Activated CD4-positive, alpha-beta memory T cell treated with anti-CD3 and anti-CD28 coated beads for 36 hours (primary cell): ENCODE measurements at regions of chr17 and their contacts with region 1.

Region 1: GRCh38 chr17:79728226-79728907 is 2.4 kb upstream of the ENPP7 start:
- DNase-seq: peak; percentile 91
- H3K4me3 Mint-ChIP-seq: peak overlapping the region; percentile 41
- H3K27ac Mint-ChIP-seq: peak overlapping the region; percentile 70
- H3K4me1 Mint-ChIP-seq: peaks cover 22% of the 10 kb centered on the region
- H3K27me3 Mint-ChIP-seq: no peaks in the 10 kb centered on the region

Region 2: DNA sequence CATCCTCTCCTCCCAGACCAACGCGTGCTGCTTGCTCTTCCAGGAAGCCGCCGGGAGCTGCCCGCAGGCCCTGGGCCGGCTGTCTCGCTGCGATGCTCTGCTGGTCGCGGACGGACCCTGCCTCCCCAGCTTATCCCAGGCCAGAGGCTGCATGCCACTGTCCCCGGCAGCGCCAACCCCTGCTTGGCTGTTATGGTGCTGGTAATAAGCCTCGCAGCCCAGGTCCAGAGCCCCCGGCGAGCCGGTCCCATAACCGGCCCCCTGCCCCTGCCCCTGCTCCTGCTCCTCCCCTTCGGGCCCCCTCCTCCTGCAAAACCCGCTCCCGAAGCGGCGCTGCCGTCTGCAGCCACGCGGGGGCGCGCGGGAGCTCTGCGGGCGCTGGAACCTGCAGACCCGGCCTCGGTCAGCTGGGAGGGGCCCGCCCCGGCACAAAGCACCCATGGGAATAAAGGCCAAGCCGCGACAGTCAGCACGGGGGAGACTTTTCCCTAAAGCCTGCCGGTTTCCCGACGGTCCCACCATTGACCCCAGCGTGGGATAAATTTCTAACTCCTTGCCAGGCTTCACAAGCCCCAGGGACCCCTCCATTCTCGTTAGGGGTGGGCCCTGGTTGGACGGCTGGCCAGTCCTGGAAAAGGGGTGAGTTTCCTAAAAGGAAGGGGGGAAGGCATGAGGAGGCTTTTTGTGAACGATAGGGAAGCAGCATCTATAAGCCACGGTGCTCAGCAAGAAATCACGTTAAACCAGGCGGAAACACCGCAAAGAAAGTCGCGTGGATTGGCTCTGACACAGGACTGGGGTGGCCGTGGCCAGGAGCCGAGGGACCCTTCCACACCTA is 13.6 kb after region 1 on chr17:
- CTCF ChIA-PET with region 1: interaction called, 11 read pairs
- POLR2A ChIA-PET with region 1: no interaction called
- intact Hi-C with region 1: no loop called
- DNase-seq: peak; percentile 81
- H3K4me3 Mint-ChIP-seq: no peak overlapping the region
- H3K27ac Mint-ChIP-seq: no peak overlapping the region
- H3K4me1 Mint-ChIP-seq: peaks cover 11% of the 10 kb centered on the region
- H3K27me3 Mint-ChIP-seq: peaks cover 33% of the 10 kb centered on the region